B cell (primary cell): ENCODE measurements at regions of chr1 and their contacts with region 1.

Region 1: DNA sequence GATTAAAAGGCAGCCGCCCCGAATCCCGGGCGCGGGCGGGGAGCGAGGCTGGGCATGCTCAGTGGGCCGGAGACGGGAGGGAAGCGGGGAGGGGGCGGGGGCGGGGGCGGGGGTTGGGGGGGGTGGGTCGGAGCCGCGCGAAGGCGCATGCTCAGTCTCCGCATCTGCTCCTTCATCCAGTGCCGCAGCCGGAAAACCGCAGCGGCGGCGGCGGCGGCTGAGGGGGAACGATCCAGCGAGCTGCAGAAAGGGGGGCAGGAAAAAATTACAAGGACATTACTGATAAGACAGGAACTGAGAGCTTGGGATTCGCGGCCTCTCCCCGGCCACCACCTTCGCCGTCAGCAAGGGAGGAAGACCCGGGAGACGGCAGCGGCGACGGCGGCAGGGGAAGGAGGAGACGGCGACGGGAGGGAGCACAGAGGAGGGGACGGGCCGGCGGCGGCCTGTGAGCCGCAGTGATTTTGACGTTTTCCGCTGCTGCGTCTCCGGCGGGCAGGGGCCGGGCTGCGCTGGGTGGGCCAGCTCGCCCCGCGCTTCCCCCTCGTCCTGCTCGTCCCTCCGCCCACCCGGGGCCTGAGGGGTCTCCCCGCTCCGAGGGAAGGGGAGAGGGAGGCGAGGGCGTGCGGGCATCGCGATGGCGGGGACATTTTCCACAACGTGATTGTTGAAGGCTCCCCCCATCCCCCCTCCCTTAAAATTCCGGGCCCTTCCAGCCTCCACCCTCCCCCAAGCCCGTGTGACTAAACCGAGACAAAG is at the start of gene CAMSAP2:
- DNase-seq: peak; percentile 62
- ATAC-seq: peak; percentile 69
- H3K4me3 ChIP-seq: peak within 1 kb of the TSS; percentile 58 to 71 (median 62)
- H3K4me3 Mint-ChIP-seq: peak within 1 kb of the TSS; percentile 96
- H3K27ac ChIP-seq: no peak within 1 kb of the TSS
- H3K27ac Mint-ChIP-seq: peak within 1 kb of the TSS; percentile 80
- H3K4me1 ChIP-seq: peaks cover 13% of the 10 kb centered on the region in 2 donors
- H3K4me1 Mint-ChIP-seq: peaks cover 17% of the 10 kb centered on the region
- H3K27me3 ChIP-seq: peaks cover 0 to 11% (median 6%) of the 10 kb centered on the region in 4 experiments
- H3K27me3 Mint-ChIP-seq: peaks cover 23% of the 10 kb centered on the region
- CTCF ChIP-seq: no peak
- total RNA-seq, gene CAMSAP2: 1.4 and 2.1 TPM in 2 replicates

Region 2: GRCh38 chr1:200510228-200510623 is 228.7 kb before region 1 on chr1:
- CTCF ChIA-PET with region 1: no interaction called
- POLR2A ChIA-PET with region 1: no interaction called
- intact Hi-C with region 1: no loop called
- DNase-seq: peak; percentile 77
- ATAC-seq: peak; percentile 63
- H3K4me3 ChIP-seq: no peak overlapping the region
- H3K4me3 Mint-ChIP-seq: no peak overlapping the region
- H3K27ac ChIP-seq: no peak overlapping the region
- H3K27ac Mint-ChIP-seq: no peak overlapping the region
- H3K4me1 ChIP-seq: no peaks in the 10 kb centered on the region
- H3K4me1 Mint-ChIP-seq: no peaks in the 10 kb centered on the region
- H3K27me3 ChIP-seq: peaks cover 0 to 9% (median 2%) of the 10 kb centered on the region in 4 experiments
- H3K27me3 Mint-ChIP-seq: peaks cover 24% of the 10 kb centered on the region
- CTCF ChIP-seq: peak; percentile 97

Region 3: GRCh38 chr1:200669314-200670241 is 69.3 kb before region 1 on chr1 and contains the start of gene DDX59:
- CTCF ChIA-PET with region 1: no interaction called
- POLR2A ChIA-PET with region 1: interaction called, 5 read pairs
- intact Hi-C with region 1: loop called (anchors 2 kb)
- DNase-seq: peak; percentile 92
- ATAC-seq: peak; percentile 82
- H3K4me3 ChIP-seq: peak within 1 kb of the TSS; percentile 56 to 95 (median 78)
- H3K4me3 Mint-ChIP-seq: peak within 1 kb of the TSS; percentile 99
- H3K27ac ChIP-seq: peak within 1 kb of the TSS; percentile 92 to 98
- H3K27ac Mint-ChIP-seq: peak within 1 kb of the TSS; percentile 99
- H3K4me1 ChIP-seq: peaks cover 8 to 13% of the 10 kb centered on the region in 2 donors
- H3K4me1 Mint-ChIP-seq: peaks cover 42% of the 10 kb centered on the region
- H3K27me3 ChIP-seq: no peaks in the 10 kb centered on the region
- H3K27me3 Mint-ChIP-seq: no peaks in the 10 kb centered on the region
- CTCF ChIP-seq: no peak
- total RNA-seq, gene DDX59: 41.9 and 43.6 TPM in 2 replicates

Region 4: GRCh38 chr1:200751717-200752116 is 12.8 kb after region 1 on chr1:
- CTCF ChIA-PET with region 1: no interaction called
- POLR2A ChIA-PET with region 1: no interaction called
- intact Hi-C with region 1: loop called (anchors 1 kb)
- DNase-seq: no peak
- ATAC-seq: no peak
- H3K4me3 ChIP-seq: no peak overlapping the region
- H3K4me3 Mint-ChIP-seq: no peak overlapping the region
- H3K27ac ChIP-seq: no peak overlapping the region
- H3K27ac Mint-ChIP-seq: no peak overlapping the region
- H3K4me1 ChIP-seq: no peaks in the 10 kb centered on the region
- H3K4me1 Mint-ChIP-seq: no peaks in the 10 kb centered on the region
- H3K27me3 ChIP-seq: peaks cover 0 to 3% (median 0%) of the 10 kb centered on the region in 4 experiments
- H3K27me3 Mint-ChIP-seq: peaks cover 17% of the 10 kb centered on the region
- CTCF ChIP-seq: no peak

Region 5: DNA sequence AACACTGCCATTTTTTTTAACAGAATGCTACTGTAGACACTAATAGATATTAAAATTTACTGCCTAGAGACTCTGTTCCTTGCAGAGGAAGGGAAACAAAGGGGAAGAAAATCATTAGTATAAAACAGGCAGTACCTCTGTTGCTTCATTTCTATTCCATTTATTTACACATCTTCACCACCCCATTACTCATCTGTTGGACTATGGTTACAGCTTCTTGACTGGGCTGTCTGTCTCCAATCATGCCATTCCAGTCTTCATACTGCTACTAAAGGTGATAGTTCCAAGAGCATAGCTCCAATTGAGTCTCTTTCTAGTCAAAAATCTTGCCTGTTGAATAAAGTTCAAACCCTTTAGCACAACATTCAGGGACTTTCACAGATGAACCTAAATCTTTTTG is 111.6 kb after region 1 on chr1:
- CTCF ChIA-PET with region 1: no interaction called
- POLR2A ChIA-PET with region 1: no interaction called
- intact Hi-C with region 1: no loop called
- DNase-seq: no peak
- ATAC-seq: no peak
- H3K4me3 ChIP-seq: no peak overlapping the region
- H3K4me3 Mint-ChIP-seq: no peak overlapping the region
- H3K27ac ChIP-seq: no peak overlapping the region
- H3K27ac Mint-ChIP-seq: no peak overlapping the region
- H3K4me1 ChIP-seq: no peaks in the 10 kb centered on the region
- H3K4me1 Mint-ChIP-seq: no peaks in the 10 kb centered on the region
- H3K27me3 ChIP-seq: no peaks in the 10 kb centered on the region
- H3K27me3 Mint-ChIP-seq: peaks cover 3% of the 10 kb centered on the region
- CTCF ChIP-seq: no peak

Region 6: GRCh38 chr1:200866521-200866920 is 127.6 kb after region 1 on chr1:
- CTCF ChIA-PET with region 1: no interaction called
- POLR2A ChIA-PET with region 1: no interaction called
- intact Hi-C with region 1: no loop called
- DNase-seq: no peak
- ATAC-seq: peak; percentile 23
- H3K4me3 ChIP-seq: no peak overlapping the region
- H3K4me3 Mint-ChIP-seq: no peak overlapping the region
- H3K27ac ChIP-seq: no peak overlapping the region
- H3K27ac Mint-ChIP-seq: no peak overlapping the region
- H3K4me1 ChIP-seq: peaks cover 19 to 54% of the 10 kb centered on the region in 2 donors
- H3K4me1 Mint-ChIP-seq: peaks cover 62% of the 10 kb centered on the region
- H3K27me3 ChIP-seq: no peaks in the 10 kb centered on the region
- H3K27me3 Mint-ChIP-seq: no peaks in the 10 kb centered on the region
- CTCF ChIP-seq: no peak